Aorta (tissue), 5 donors: ENCODE measurements at regions of chr12 and their contacts with region 1.

Region 1: GRCh38 chr12:58920102-58920960 is at the start of gene LRIG3:
- DNase-seq: peak; percentile 92 to 96
- ATAC-seq: peak; percentile 96
- H3K4me3 ChIP-seq: peak within 1 kb of the TSS; percentile 61 to 83
- H3K27ac ChIP-seq: peak within 1 kb of the TSS; percentile 70 to 85
- H3K4me1 ChIP-seq: no peaks in the 10 kb centered on the region
- H3K27me3 ChIP-seq: no peaks in the 10 kb centered on the region
- total RNA-seq, gene LRIG3: 23.3 to 51.4 TPM

Region 2: GRCh38 chr12:58425481-58426392 is 494.6 kb before region 1 on chr12:
- intact Hi-C with region 1: loop called in 1 of 2 experiments (anchors 10 kb)
- DNase-seq: peak in 1 of 2 donors; percentile 63
- ATAC-seq: peak; percentile 86
- H3K4me3 ChIP-seq: no peak overlapping the region
- H3K27ac ChIP-seq: peak overlapping the region; percentile 22 to 96
- H3K4me1 ChIP-seq: peaks cover 2 to 4% of the 10 kb centered on the region in 2 donors
- H3K27me3 ChIP-seq: no peaks in the 10 kb centered on the region

Region 3: GRCh38 chr12:58882826-58883225 is 37.5 kb before region 1 on chr12:
- intact Hi-C with region 1: loop called (anchors 5 kb)
- DNase-seq: no peak
- ATAC-seq: no peak
- H3K4me3 ChIP-seq: no peak overlapping the region
- H3K27ac ChIP-seq: peak overlapping the region in 1 of 2 donors; percentile 71
- H3K4me1 ChIP-seq: peaks cover 4 to 6% of the 10 kb centered on the region in 2 donors
- H3K27me3 ChIP-seq: no peaks in the 10 kb centered on the region

Region 4: GRCh38 chr12:59041241-59042121 is 121.2 kb after region 1 on chr12:
- intact Hi-C with region 1: loop called in 1 of 2 experiments (anchors 1 kb)
- DNase-seq: no peak
- ATAC-seq: peak; percentile 61
- H3K4me3 ChIP-seq: no peak overlapping the region
- H3K27ac ChIP-seq: peak overlapping the region; percentile 79 to 89
- H3K4me1 ChIP-seq: peaks cover 0 to 6% of the 10 kb centered on the region in 2 donors
- H3K27me3 ChIP-seq: no peaks in the 10 kb centered on the region

Region 5: GRCh38 chr12:59087077-59087673 is 166.8 kb after region 1 on chr12:
- intact Hi-C with region 1: loop called in 1 of 2 experiments (anchors 10 kb)
- DNase-seq: no peak
- ATAC-seq: no peak
- H3K4me3 ChIP-seq: no peak overlapping the region
- H3K27ac ChIP-seq: no peak overlapping the region
- H3K4me1 ChIP-seq: no peaks in the 10 kb centered on the region
- H3K27me3 ChIP-seq: no peaks in the 10 kb centered on the region